ENCODE measurements at regions of chrX and their contacts with region 1.

Region 1: GRCh38 chrX:54529552-54530357 is at the start of gene GNL3L:
- DNase-seq: peak; percentile 94
- H3K4me3 ChIP-seq: peak within 1 kb of the TSS; percentile 55 to 77 (median 59)
- H3K27ac ChIP-seq: peak within 1 kb of the TSS; percentile 77 to 86 (median 80)
- H3K4me1 ChIP-seq: peaks cover 0 to 16% (median 11%) of the 10 kb centered on the region in 4 donors
- H3K27me3 ChIP-seq: no peaks in the 10 kb centered on the region
- CTCF ChIP-seq: no peak
- EP300 ChIP-seq: no peak
- POLR2A ChIP-seq: no peak
- total RNA-seq, gene GNL3L: 9.9 to 18.3 (median 17.5) TPM

Region 2: GRCh38 chrX:53683556-53684414 is 846.0 kb before region 1 on chrX:
- intact Hi-C with region 1: loop called (anchors 10 kb)
- DNase-seq: peak; percentile 98
- H3K4me3 ChIP-seq: peak overlapping the region; percentile 48 to 69 (median 62)
- H3K27ac ChIP-seq: peak overlapping the region; percentile 89 to 92 (median 89)
- H3K4me1 ChIP-seq: peaks cover 0 to 22% (median 9%) of the 10 kb centered on the region in 4 donors
- H3K27me3 ChIP-seq: no peaks in the 10 kb centered on the region
- CTCF ChIP-seq: no peak
- EP300 ChIP-seq: no peak
- POLR2A ChIP-seq: peak; percentile 42 to 50

Region 3: GRCh38 chrX:54182864-54183608 is 346.7 kb before region 1 on chrX and contains the start of gene FAM120C:
- intact Hi-C with region 1: loop called (anchors 5 kb)
- DNase-seq: peak; percentile 84
- H3K4me3 ChIP-seq: peak within 1 kb of the TSS; percentile 61 to 93 (median 78)
- H3K27ac ChIP-seq: peak within 1 kb of the TSS; percentile 88 to 94 (median 92)
- H3K4me1 ChIP-seq: peaks cover 0 to 33% (median 10%) of the 10 kb centered on the region in 4 donors
- H3K27me3 ChIP-seq: no peaks in the 10 kb centered on the region
- CTCF ChIP-seq: no peak
- EP300 ChIP-seq: no peak
- POLR2A ChIP-seq: no peak
- total RNA-seq, gene FAM120C: 4.4 to 7.7 (median 6.0) TPM

Region 4: DNA sequence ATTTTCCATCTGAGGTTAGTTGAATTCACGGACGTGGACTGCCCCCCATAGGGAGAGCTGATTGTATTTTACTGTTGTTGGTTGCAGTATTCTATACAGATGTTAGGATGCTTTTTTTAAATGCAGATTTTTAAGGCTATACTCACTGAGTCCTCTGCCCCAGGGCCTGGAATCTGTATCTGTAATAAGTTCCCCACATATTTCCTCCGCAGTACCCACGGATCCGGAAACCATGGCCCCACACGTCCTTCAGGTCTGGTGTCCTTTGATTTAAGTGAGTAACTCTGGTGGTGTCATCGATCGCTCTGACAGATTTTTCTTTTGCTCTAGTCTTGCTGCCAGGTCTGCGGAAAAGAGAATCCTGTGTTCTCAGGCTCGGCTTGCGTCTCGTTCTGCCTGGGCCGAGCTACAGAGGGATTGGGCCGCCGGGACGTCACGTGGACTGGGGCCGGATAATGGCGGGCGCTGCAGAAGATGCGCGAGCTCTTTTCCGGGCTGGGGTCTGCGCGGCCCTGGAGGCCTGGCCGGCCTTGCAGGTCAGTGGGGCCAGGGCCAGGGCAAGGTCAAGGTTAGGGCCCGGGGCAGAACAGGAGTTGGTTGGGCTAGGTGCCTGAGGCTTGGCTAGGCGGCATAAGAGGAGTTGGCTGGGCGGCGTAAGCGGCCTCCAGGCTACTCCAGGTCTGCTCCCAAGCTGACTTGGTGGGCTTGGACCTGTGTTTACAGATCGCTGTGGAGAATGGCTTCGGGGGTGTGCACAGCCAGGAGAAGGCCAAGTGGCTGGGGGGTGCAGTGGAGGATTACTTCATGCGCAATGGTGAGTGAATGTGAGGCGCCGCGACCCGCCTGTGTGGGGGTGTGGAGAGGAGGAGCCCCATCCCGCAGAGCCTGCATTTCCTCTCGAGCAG is 89.5 kb before region 1 on chrX and contains the start of gene TSR2:
- intact Hi-C with region 1: loop called (anchors 10 kb)
- DNase-seq: peak; percentile 91
- H3K4me3 ChIP-seq: peak within 1 kb of the TSS; percentile 74 to 87 (median 82)
- H3K27ac ChIP-seq: peak within 1 kb of the TSS; percentile 49 to 78 (median 72)
- H3K4me1 ChIP-seq: peaks cover 0 to 12% (median 11%) of the 10 kb centered on the region in 4 donors
- H3K27me3 ChIP-seq: no peaks in the 10 kb centered on the region
- CTCF ChIP-seq: no peak
- EP300 ChIP-seq: no peak
- POLR2A ChIP-seq: peak in 1 of 2 donors; percentile 36
- total RNA-seq, gene TSR2: 20.2 to 29.3 (median 26.8) TPM

Region 5: GRCh38 chrX:54495814-54496516 is 33.8 kb before region 1 on chrX and contains the start of gene FGD1:
- intact Hi-C with region 1: loop called (anchors 1 kb)
- DNase-seq: peak; percentile 85
- H3K4me3 ChIP-seq: peak within 1 kb of the TSS; percentile 53 to 66 (median 62)
- H3K27ac ChIP-seq: peak within 1 kb of the TSS; percentile 78 to 85 (median 83)
- H3K4me1 ChIP-seq: peaks cover 0 to 25% (median 14%) of the 10 kb centered on the region in 4 donors
- H3K27me3 ChIP-seq: no peaks in the 10 kb centered on the region
- CTCF ChIP-seq: no peak
- EP300 ChIP-seq: no peak
- POLR2A ChIP-seq: no peak
- total RNA-seq, gene FGD1: 3.2 to 9.7 (median 4.0) TPM

Region 6: DNA sequence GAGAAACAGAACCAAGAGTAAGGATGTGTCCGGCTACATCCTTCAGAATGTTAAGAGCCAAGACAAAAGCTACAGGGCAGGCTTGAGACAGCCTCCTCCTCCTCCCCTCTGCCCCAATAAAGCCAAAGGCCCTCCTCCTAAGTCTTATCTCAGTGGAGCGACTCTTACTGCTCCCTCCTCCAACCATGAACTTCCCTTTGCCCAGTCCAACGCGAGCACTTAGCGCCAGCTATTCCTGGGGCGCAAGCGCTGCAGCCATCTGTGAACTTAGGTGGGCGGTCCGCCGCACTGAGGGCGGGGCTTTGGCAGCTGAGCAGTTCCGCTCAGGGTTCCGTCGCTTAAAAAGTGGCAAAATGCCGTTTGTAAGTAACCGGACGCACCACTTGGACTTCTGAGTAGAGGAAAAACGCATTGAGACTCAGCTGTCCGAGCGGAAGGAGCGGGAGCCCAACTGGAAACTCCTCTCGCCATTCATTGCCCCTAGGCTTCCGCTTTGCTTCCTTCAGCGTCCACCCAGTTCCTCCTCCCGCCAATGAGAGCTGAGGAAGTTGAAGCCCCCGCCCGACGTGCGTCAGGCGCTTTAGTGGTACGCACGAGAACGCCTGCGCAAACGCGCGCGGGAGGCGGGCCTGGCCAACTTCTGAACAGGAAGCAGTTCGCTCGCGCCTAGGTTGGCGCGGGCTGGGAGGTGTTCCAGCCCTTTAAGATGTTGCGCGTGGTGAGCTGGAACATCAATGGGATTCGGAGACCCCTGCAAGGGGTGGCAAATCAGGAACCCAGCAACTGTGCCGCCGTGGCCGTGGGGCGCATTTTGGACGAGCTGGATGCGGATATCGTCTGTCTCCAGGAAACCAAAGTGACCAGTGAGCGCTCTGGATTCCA is 470.2 kb after region 1 on chrX and contains the start of gene APEX2:
- intact Hi-C with region 1: loop called (anchors 10 kb)
- DNase-seq: peak; percentile 96
- H3K4me3 ChIP-seq: peak within 1 kb of the TSS; percentile 34 to 58 (median 55)
- H3K27ac ChIP-seq: peak within 1 kb of the TSS; percentile 83 to 87 (median 84)
- H3K4me1 ChIP-seq: peaks cover 0 to 15% (median 6%) of the 10 kb centered on the region in 4 donors
- H3K27me3 ChIP-seq: no peaks in the 10 kb centered on the region
- CTCF ChIP-seq: no peak
- EP300 ChIP-seq: no peak
- POLR2A ChIP-seq: peak; percentile 66 to 77
- total RNA-seq, gene APEX2: 3.9 to 5.7 (median 4.6) TPM

Measured in sigmoid colon (tissue), 7 donors.